Activated CD4-positive, alpha-beta T cell treated with anti-CD3 and anti-CD28 coated beads for 36 hours (primary cell): ENCODE measurements at regions of chr20 and their contacts with region 1.

Region 1: GRCh38 chr20:58888521-58889333 is 36.2 kb downstream of the GNAS start:
- DNase-seq: peak; percentile 91
- ATAC-seq: peak; percentile 58
- H3K4me3 Mint-ChIP-seq: peak overlapping the region; percentile 88
- H3K27ac Mint-ChIP-seq: peak overlapping the region; percentile 47
- H3K4me1 Mint-ChIP-seq: peaks cover 29% of the 10 kb centered on the region
- H3K27me3 Mint-ChIP-seq: no peaks in the 10 kb centered on the region

Region 2: GRCh38 chr20:58388882-58389323 is 499.8 kb before region 1 on chr20 and contains the start of gene VAPB:
- CTCF ChIA-PET with region 1: no interaction called
- POLR2A ChIA-PET with region 1: interaction called, 4 read pairs
- intact Hi-C with region 1: loop called in 1 of 2 experiments (anchors 1 kb)
- DNase-seq: peak; percentile 98
- ATAC-seq: peak; percentile 99
- H3K4me3 Mint-ChIP-seq: peak within 1 kb of the TSS; percentile 100
- H3K27ac Mint-ChIP-seq: peak within 1 kb of the TSS; percentile 97
- H3K4me1 Mint-ChIP-seq: peaks cover 39% of the 10 kb centered on the region
- H3K27me3 Mint-ChIP-seq: peaks cover 2% of the 10 kb centered on the region
- total RNA-seq, gene VAPB: 43.9 to 54.5 TPM

Region 3: DNA sequence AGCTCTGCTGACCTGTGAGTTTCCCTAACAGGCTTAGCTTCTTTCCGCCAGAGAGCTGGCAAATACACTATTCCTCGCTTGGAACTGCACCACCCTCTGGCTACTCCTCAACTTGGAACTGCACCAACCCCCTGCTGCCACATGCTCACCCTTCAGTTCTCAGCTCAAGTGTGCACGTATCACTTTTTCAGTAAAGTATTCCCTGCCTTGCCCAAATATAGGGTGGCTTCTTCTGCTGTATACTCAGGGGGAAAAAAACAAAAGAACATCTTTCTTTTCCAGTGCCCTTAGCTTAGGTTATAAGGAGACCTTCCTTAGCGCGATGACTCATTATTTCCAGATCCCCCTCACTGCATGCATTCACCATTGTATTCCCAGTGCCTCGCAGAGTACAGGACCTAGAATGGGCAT is 59.2 kb before region 1 on chr20:
- CTCF ChIA-PET with region 1: no interaction called
- POLR2A ChIA-PET with region 1: no interaction called
- intact Hi-C with region 1: no loop called
- DNase-seq: no peak
- ATAC-seq: no peak
- H3K4me3 Mint-ChIP-seq: no peak overlapping the region
- H3K27ac Mint-ChIP-seq: no peak overlapping the region
- H3K4me1 Mint-ChIP-seq: no peaks in the 10 kb centered on the region
- H3K27me3 Mint-ChIP-seq: peaks cover 12% of the 10 kb centered on the region

Region 4: DNA sequence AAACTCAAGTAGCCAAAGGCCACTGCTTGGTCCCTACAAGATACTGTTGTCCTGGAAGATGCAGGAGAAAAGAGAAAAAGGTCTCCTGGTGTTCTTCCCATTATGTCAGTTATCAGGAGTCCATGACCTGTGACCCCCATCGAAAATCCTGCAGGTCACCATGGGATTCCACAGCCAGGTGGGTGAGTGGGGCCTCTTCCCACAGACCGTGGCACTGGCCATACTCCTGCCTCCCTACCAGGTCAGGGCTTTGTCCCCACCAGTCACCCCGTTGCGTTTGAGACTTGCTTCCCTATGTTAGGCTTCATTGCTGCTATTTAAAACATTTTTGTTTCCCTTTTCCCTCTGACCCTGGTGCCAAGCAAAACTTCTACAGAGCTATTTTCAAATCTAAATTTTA is 24.4 kb after region 1 on chr20:
- CTCF ChIA-PET with region 1: no interaction called
- POLR2A ChIA-PET with region 1: no interaction called
- intact Hi-C with region 1: no loop called
- DNase-seq: no peak
- ATAC-seq: no peak
- H3K4me3 Mint-ChIP-seq: no peak overlapping the region
- H3K27ac Mint-ChIP-seq: no peak overlapping the region
- H3K4me1 Mint-ChIP-seq: peaks cover 5% of the 10 kb centered on the region
- H3K27me3 Mint-ChIP-seq: no peaks in the 10 kb centered on the region

Region 5: GRCh38 chr20:58938541-58938940 is 49.8 kb after region 1 on chr20:
- CTCF ChIA-PET with region 1: no interaction called
- POLR2A ChIA-PET with region 1: no interaction called
- intact Hi-C with region 1: no loop called
- DNase-seq: no peak
- ATAC-seq: no peak
- H3K4me3 Mint-ChIP-seq: no peak overlapping the region
- H3K27ac Mint-ChIP-seq: no peak overlapping the region
- H3K4me1 Mint-ChIP-seq: no peaks in the 10 kb centered on the region
- H3K27me3 Mint-ChIP-seq: peaks cover 4% of the 10 kb centered on the region

Region 6: DNA sequence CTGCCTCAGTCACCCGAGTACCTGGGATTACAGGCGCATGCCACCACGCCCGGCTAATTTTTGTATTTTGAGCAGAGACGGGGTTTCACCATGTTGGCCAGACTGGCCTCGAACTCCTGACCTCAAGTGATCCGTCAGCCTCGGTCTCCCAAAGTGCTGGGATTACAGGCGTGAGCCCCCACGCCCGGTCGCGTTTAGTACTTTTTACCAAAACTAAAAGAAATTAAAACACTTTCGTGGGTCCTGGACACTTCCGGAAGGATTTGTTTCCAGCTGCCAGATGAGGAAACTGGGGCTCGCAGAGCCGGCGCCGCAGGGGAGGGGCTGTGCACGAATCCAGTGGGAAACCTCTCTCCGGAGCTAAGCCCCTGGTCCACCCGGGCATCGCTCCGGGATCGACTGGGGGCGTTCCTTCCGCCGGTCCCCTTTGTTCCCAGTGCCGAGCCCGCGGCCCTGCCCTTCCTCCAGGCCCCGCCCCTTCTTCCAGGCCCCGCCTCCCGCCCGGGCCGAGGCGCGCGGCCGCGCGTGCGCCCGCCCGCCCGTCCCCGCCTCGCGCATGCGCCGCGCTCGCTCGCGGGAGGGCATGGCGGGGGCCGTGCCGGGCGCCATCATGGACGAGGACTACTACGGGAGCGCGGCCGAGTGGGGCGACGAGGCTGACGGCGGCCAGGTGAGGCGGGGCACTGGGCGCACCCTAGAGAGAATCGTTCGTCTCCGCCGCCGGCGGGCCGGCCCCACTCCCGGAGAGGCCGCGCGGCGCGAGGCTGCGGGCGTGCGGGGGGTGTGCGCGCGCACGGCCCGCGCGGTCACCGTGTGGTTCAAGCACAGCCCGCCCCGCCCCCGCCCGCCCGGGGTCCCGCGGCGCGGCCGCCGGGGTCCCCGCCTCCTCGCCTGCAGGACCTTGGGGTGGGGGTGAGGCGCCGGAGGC is 92.2 kb after region 1 on chr20 and contains the start of gene NELFCD:
- CTCF ChIA-PET with region 1: no interaction called
- POLR2A ChIA-PET with region 1: no interaction called
- intact Hi-C with region 1: loop called (anchors 1 to 2 kb)
- DNase-seq: peak; percentile 94
- ATAC-seq: peak; percentile 87
- H3K4me3 Mint-ChIP-seq: peak within 1 kb of the TSS; percentile 85
- H3K27ac Mint-ChIP-seq: peak within 1 kb of the TSS; percentile 89
- H3K4me1 Mint-ChIP-seq: peaks cover 32% of the 10 kb centered on the region
- H3K27me3 Mint-ChIP-seq: no peaks in the 10 kb centered on the region
- total RNA-seq, gene NELFCD: 111 to 121 TPM

Region 7: DNA sequence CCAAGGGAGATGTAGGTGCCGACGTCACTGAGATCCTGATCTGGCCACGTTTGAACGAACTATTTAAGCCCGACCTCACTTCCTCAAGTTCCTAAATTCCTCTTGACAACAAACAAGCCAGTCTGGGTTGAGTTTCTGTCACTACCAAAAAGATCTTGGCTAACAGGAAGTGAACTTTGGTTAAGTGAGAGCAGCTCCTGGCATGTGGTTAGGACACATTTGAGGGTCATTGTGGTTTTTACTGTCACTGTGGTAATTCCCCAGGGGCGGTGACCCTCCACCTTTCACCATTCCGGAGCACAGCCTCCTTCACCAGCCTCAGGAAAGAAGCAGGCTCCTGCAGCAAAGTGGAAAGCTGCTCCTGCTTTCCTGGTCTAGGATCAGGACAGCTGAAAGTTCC is 231.8 kb after region 1 on chr20:
- CTCF ChIA-PET with region 1: no interaction called
- POLR2A ChIA-PET with region 1: no interaction called
- intact Hi-C with region 1: loop called in 1 of 2 experiments (anchors 1 kb)
- DNase-seq: peak; percentile 43
- ATAC-seq: peak; percentile 10
- H3K4me3 Mint-ChIP-seq: peak overlapping the region; percentile 22
- H3K27ac Mint-ChIP-seq: peak overlapping the region; percentile 71
- H3K4me1 Mint-ChIP-seq: peaks cover 78% of the 10 kb centered on the region
- H3K27me3 Mint-ChIP-seq: no peaks in the 10 kb centered on the region

Region 8: DNA sequence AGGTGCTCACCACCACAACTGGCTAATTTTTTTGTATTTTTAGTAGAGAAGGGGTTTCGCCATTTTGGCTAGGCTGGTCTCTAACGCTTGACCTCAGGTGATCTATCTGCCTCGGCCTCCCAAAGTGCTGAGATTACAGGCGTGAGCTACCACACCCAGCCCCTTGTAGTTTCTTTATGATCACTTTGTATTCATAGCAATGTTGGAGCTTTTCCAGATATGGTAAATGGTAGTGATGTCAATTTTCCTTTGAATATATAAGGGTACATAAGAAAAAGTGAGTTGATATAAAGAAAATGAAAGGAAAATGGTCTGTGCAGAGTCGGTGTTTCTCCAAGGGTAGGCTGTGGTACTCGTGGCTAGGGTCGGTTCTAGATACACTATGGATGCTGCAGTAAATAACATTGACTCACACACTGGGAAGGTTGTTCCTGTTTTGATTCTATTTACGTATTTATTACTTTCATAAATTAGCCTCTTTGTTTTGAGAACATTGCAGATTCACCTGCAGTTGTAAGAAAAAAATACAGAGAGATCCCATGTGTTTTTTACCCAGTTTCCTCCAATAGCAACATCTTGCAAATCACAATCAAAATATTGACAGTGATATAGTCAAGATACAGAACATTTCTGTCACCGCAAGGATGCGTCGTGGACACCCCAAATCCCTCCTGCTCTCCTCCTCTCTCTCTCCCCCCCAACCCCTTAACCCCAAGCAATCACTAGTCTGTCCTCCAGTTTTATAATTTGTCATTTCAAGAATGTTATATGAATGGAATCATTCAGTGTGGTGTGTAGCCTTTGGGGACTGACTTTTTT is 277.4 kb after region 1 on chr20:
- CTCF ChIA-PET with region 1: no interaction called
- POLR2A ChIA-PET with region 1: no interaction called
- intact Hi-C with region 1: loop called (anchors 2 to 5 kb)
- DNase-seq: peak; percentile 62
- ATAC-seq: peak; percentile 69
- H3K4me3 Mint-ChIP-seq: peak overlapping the region; percentile 76
- H3K27ac Mint-ChIP-seq: peak overlapping the region; percentile 94
- H3K4me1 Mint-ChIP-seq: peaks cover 89% of the 10 kb centered on the region
- H3K27me3 Mint-ChIP-seq: no peaks in the 10 kb centered on the region

Region 9: DNA sequence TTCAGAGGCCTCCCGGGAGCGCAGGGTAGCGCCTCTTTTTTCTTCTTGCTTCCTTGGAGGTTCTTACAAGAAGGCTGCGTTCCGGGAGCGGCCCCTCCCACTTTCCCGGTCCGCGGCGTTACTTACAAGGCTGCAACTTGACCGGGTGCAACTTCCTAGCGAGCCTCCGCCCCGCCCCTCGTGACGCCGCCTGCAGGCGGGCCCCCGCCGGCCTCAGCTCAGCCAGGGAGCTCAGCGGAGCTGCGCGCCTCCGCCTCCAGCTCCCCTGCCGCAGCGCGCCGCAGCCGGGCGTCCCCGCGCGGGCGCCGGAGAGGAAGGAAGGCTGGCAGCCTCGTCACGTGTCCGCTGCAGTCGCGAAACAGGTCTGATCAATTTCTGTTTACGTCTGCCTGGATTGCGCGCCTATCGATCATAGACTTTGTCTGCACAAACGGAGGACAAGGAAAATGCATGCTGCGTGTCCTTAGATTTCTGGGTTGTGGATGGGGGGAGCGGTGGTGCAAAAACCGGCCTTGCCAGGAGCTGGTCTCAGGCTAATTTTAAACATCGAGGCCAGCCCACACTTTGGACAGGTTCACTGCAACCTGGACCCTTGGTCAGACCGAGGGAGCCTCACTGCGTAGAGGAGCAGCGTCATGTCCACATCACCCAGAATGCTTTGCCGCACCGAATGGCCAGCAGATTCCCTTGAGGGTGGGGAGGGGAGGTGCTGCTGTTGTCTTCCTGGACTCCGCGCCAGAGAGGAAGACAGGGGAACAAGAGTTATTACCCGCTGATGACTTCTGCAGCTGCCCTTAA is 1051.6 kb after region 1 on chr20 and contains the starts of genes FAM217B and PPP1R3D:
- CTCF ChIA-PET with region 1: no interaction called
- POLR2A ChIA-PET with region 1: no interaction called
- intact Hi-C with region 1: loop called in 1 of 2 experiments (anchors 5 kb)
- DNase-seq: peak; percentile 95
- ATAC-seq: peak; percentile 95
- H3K4me3 Mint-ChIP-seq: peak within 1 kb of the TSS; percentile 90
- H3K27ac Mint-ChIP-seq: peak within 1 kb of the TSS; percentile 95
- H3K4me1 Mint-ChIP-seq: peaks cover 36% of the 10 kb centered on the region
- H3K27me3 Mint-ChIP-seq: no peaks in the 10 kb centered on the region
- total RNA-seq, gene FAM217B: 25.6 to 33.2 TPM
- total RNA-seq, gene PPP1R3D: 4.4 to 4.7 TPM